Endothelial cell of umbilical vein (primary cell): ENCODE measurements at regions of chr13 and their contacts with region 1.

Region 1: GRCh38 chr13:61531383-61532065 is 115.9 kb upstream of the PCDH20 start:
- DNase-seq: no peak
- H3K4me3 ChIP-seq: no peak overlapping the region
- H3K27ac ChIP-seq: no peak overlapping the region
- H3K4me1 ChIP-seq: no peaks in the 10 kb centered on the region
- H3K27me3 ChIP-seq: no peaks in the 10 kb centered on the region
- CTCF ChIP-seq: no peak
- POLR2A ChIP-seq: no peak

Region 2: GRCh38 chr13:61286148-61286745 is 245.3 kb before region 1 on chr13:
- CTCF ChIA-PET with region 1: no interaction called
- POLR2A ChIA-PET with region 1: no interaction called
- dilution Hi-C with region 1: no loop called
- intact Hi-C with region 1: no loop called
- DNase-seq: no peak
- H3K4me3 ChIP-seq: no peak overlapping the region
- H3K27ac ChIP-seq: no peak overlapping the region
- H3K4me1 ChIP-seq: no peaks in the 10 kb centered on the region
- H3K27me3 ChIP-seq: no peaks in the 10 kb centered on the region
- CTCF ChIP-seq: no peak
- POLR2A ChIP-seq: no peak

Region 3: DNA sequence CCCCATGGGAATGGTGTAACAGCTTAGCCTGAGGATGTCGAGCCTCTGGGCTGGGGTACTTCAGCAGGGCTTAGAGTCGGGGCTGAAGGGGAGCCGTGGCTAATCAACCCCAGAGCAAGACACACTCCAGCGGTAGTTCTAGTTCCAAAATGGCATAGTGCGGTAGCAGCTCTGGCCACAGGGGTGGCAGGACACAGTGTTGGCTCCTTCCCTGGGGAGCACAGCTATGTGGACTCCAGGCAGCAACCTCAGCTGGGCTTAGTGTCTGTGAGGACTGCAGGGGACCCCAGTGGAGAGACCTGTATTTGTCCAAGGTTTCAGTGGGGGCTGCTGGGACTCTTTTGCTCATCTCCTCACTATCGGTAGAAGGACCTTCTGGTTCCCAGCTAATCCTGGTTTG is 45.0 kb before region 1 on chr13:
- CTCF ChIA-PET with region 1: no interaction called
- POLR2A ChIA-PET with region 1: no interaction called
- dilution Hi-C with region 1: no loop called
- intact Hi-C with region 1: loop called (anchors 2 kb)
- DNase-seq: no peak
- H3K4me3 ChIP-seq: no peak overlapping the region
- H3K27ac ChIP-seq: no peak overlapping the region
- H3K4me1 ChIP-seq: no peaks in the 10 kb centered on the region
- H3K27me3 ChIP-seq: no peaks in the 10 kb centered on the region
- CTCF ChIP-seq: no peak
- POLR2A ChIP-seq: no peak